Activated T-helper 2 cell treated with anti-CD3 and anti-CD28 coated beads, Interferon-gamma antibody, Interleukin-2, Interleukin-4, amounts not matched to agents 10 μg/mL and 5 μg/mL and 100 μg/mL, durations not matched to agents 14 hours and 24 hours and 36 hours (primary cell): ENCODE measurements at regions of chr10 and their contacts with region 1.

Region 1: GRCh38 chr10:43781480-43782361 is 133.0 kb upstream of the ZNF32 start:
- DNase-seq: peak; percentile 26
- H3K4me3 Mint-ChIP-seq: no peak overlapping the region
- H3K27ac Mint-ChIP-seq: peak overlapping the region; percentile 78
- H3K4me1 Mint-ChIP-seq: peaks cover 42% of the 10 kb centered on the region
- H3K27me3 Mint-ChIP-seq: no peaks in the 10 kb centered on the region

Region 2: DNA sequence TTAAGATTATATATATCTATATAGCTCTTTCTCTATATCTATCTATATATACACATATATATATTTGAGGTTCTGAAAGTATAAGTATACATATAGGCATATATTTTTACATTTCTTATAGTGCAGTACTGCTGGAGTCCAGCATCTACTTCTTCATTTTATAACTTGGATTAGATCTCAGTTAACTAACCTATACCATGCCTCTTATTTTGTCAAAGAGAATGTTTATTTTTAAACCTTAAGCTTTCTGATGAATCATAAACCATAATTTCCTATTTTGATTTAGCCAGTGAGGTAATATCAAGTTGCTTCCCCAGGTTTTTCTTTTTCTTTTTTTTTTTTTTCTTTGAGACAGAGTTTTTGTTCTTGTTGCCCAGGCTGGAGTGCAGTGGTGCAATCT is 141.1 kb before region 1 on chr10:
- intact Hi-C with region 1: no loop called
- DNase-seq: no peak
- H3K4me3 Mint-ChIP-seq: no peak overlapping the region
- H3K27ac Mint-ChIP-seq: no peak overlapping the region
- H3K4me1 Mint-ChIP-seq: no peaks in the 10 kb centered on the region
- H3K27me3 Mint-ChIP-seq: no peaks in the 10 kb centered on the region

Region 3: GRCh38 chr10:43808136-43808535 is 26.4 kb after region 1 on chr10:
- intact Hi-C with region 1: loop called (anchors 1 kb)
- DNase-seq: no peak
- H3K4me3 Mint-ChIP-seq: peak overlapping the region; percentile 13
- H3K27ac Mint-ChIP-seq: no peak overlapping the region
- H3K4me1 Mint-ChIP-seq: peaks cover 55% of the 10 kb centered on the region
- H3K27me3 Mint-ChIP-seq: peaks cover 9% of the 10 kb centered on the region

Region 4: GRCh38 chr10:43816351-43817321 is 34.9 kb after region 1 on chr10:
- intact Hi-C with region 1: loop called (anchors 1 kb)
- DNase-seq: peak; percentile 75
- H3K4me3 Mint-ChIP-seq: peak overlapping the region; percentile 10
- H3K27ac Mint-ChIP-seq: peak overlapping the region; percentile 87
- H3K4me1 Mint-ChIP-seq: peaks cover 45% of the 10 kb centered on the region
- H3K27me3 Mint-ChIP-seq: no peaks in the 10 kb centered on the region